HEK293 (cell line): ENCODE measurements at regions of chr3 and their contacts with region 1.

Region 1: DNA sequence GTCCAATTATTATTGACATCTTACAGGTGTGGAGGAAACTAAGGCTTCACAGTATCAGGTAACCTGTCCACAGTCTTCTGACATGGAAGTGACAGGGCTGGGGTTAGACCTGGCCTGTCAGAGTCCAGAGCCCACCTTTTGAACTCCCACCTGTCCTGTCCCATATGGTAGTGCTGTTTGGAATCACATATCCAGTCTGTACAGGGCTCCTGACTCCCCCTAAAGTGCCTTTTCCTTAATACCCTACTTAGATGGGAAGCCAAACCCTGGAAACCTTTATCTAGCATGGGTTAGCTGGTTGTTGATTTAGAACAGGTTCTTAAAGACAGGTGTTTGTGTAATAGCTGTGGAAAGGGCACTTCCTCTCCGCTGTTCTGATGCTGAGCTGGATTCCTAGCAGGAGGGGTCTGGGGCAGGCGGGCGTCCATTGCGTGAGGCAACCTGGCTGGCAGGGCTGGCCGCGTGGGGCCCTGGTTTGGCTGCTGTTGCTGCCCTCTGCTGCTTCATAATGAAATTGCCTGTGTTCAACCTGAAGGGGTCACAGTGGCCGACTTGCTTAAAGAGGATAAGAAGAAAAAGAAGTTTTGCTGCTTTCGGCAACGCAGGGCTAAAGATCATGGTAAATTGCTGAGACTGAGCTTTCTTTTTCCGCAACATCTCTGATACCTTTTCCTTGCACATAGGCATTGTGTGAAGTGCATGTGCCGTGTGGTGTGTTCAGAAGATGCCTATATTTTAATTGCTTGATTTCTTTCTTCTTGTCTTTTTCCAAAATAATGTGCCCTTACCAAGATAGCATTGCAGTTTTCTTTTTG is 136.2 kb downstream of the CHDH start:
- H3K4me3 ChIP-seq: no peak overlapping the region
- H3K27ac ChIP-seq: no peak overlapping the region
- H3K4me1 ChIP-seq: no peaks in the 10 kb centered on the region
- CTCF ChIP-seq: peak; percentile 69

Region 2: GRCh38 chr3:53375019-53375418 is 335.0 kb before region 1 on chr3:
- CTCF ChIA-PET with region 1: interaction called, 33 read pairs
- POLR2A ChIA-PET with region 1: no interaction called
- H3K4me3 ChIP-seq: no peak overlapping the region
- H3K27ac ChIP-seq: no peak overlapping the region
- H3K4me1 ChIP-seq: no peaks in the 10 kb centered on the region
- CTCF ChIP-seq: peak; percentile 53; the same call in 1 of the 2 replicates

Region 3: GRCh38 chr3:53680028-53680427 is 30.0 kb before region 1 on chr3:
- CTCF ChIA-PET with region 1: interaction called, 10 read pairs
- POLR2A ChIA-PET with region 1: no interaction called
- H3K4me3 ChIP-seq: no peak overlapping the region
- H3K27ac ChIP-seq: no peak overlapping the region
- H3K4me1 ChIP-seq: no peaks in the 10 kb centered on the region
- CTCF ChIP-seq: no peak

Region 4: DNA sequence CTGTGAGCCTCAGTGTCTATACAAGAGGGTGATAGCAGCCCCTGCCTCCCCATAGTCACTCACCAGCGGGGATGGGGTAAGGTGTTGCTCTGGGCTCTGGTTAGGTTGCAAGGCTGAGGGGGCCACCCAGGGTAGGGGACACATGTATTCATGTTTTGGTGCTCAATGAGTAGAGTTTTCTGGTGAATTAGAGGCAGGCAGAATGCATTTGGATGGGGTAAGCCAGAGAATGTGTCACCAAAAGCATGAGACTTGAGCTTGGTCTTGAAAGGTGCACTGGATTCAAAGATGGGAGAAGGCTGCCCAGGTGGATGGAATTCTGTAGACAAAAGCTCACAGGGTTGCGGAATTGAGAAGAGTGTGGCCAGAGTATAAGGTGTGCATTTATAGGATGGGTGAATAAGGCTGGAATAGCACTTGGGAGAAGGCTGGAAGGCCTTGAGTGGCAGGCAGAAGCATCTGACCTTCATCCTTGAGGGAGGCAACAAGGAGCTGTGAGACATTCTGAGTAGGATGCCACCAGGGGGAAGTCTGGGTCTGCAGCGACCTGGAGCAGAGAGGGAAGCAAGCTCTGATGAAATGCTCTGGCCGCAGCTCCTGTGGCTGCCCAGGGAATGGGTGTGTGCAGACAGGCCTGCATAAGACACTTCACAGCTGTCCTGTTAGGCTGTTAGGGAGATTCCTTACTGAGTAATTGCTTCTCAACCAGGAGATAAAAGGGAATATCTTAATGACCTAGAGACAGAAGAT is 13.5 kb before region 1 on chr3:
- CTCF ChIA-PET with region 1: interaction called, 21 read pairs
- POLR2A ChIA-PET with region 1: no interaction called
- H3K4me3 ChIP-seq: no peak overlapping the region
- H3K27ac ChIP-seq: no peak overlapping the region
- H3K4me1 ChIP-seq: no peaks in the 10 kb centered on the region
- CTCF ChIP-seq: no peak